GM18951 (cell line): ENCODE measurements at regions of chr14 and their contacts with region 1.

Region 1: GRCh38 chr14:102768223-102769048 is 8.8 kb upstream of the TRAF3 start:
- POLR2A ChIP-seq: peak; percentile 35

Region 2: GRCh38 chr14:102590667-102591355 is 177.6 kb before region 1 on chr14:
- in situ Hi-C with region 1: no loop called
- POLR2A ChIP-seq: no peak

Region 3: DNA sequence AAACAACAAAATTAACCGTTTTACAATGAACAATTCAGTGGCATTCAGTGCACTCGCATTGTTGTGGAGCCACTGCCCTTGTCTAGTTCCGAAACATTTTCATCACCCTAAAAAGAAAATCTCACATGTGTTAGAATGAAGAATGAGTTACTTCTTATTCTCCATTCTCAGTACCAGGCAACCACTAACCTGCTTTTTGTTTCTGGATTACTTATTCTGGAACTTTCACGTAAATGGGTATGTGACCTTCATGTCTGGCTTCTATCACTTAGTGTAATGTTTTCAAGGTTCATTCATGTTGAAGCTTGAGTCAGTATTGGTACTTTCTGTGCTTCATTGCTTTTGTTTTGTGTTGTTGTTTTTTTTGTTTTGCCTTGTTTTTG is 160.4 kb before region 1 on chr14:
- in situ Hi-C with region 1: loop called (anchors 10 kb)
- POLR2A ChIP-seq: no peak